Calu3 (cell line): ENCODE measurements at regions of chr16 and their contacts with region 1.

Region 1: GRCh38 chr16:57244767-57245471 is at the start of gene ARL2BP:
- DNase-seq: peak; percentile 100
- H3K4me3 Mint-ChIP-seq: peak within 1 kb of the TSS; percentile 82
- H3K27ac Mint-ChIP-seq: peak within 1 kb of the TSS; percentile 97
- H3K4me1 Mint-ChIP-seq: peaks cover 13% of the 10 kb centered on the region
- H3K27me3 Mint-ChIP-seq: no peaks in the 10 kb centered on the region
- CTCF ChIP-seq: no peak
- total RNA-seq, gene ARL2BP: 32.6 and 33.3 TPM in 2 replicates

Region 2: GRCh38 chr16:56911771-56912571 is 332.9 kb before region 1 on chr16:
- CTCF ChIA-PET with region 1: no interaction called
- intact Hi-C with region 1: no loop called
- DNase-seq: no peak
- H3K4me3 Mint-ChIP-seq: no peak overlapping the region
- H3K27ac Mint-ChIP-seq: no peak overlapping the region
- H3K4me1 Mint-ChIP-seq: peaks cover 16% of the 10 kb centered on the region
- H3K27me3 Mint-ChIP-seq: peaks cover 85% of the 10 kb centered on the region
- CTCF ChIP-seq: no peak

Region 3: DNA sequence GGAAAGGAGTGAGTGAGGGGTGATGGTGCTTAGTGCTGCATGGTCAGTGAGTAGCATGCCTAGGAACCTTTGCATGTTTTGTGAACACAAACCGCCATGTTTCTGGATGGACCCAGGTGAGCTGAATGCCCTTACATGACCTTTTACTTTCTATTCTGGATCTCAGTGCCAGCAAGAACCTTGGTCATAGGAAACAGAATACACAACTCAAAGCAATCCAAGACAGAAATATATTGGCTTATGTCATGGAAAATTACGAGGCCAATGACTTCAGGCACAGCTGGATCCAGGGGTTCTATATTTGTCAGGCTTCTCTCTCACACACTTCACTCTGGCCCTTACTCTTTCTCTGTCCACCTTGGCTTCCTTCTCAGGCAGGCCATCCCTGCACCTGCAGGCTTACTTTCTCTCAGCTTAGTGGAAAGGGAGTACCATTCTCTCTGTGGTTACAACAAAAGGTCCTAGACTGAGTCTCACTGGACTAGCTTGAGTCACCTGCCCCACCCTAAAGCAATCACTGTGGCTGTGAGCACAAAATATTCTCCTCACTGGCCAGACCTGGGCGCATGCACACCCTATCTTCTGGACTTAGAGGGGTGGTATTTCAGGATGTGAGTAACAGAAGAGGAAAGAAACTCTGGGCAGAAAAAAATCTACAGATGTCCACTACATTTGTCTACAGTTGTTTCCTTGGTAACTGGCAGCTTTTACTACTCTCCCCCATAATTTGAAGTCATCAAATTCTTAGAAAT is 172.9 kb before region 1 on chr16:
- CTCF ChIA-PET with region 1: no interaction called
- intact Hi-C with region 1: no loop called
- DNase-seq: peak; percentile 25
- H3K4me3 Mint-ChIP-seq: no peak overlapping the region
- H3K27ac Mint-ChIP-seq: no peak overlapping the region
- H3K4me1 Mint-ChIP-seq: peaks cover 8% of the 10 kb centered on the region
- H3K27me3 Mint-ChIP-seq: peaks cover 40% of the 10 kb centered on the region
- CTCF ChIP-seq: no peak

Region 4: DNA sequence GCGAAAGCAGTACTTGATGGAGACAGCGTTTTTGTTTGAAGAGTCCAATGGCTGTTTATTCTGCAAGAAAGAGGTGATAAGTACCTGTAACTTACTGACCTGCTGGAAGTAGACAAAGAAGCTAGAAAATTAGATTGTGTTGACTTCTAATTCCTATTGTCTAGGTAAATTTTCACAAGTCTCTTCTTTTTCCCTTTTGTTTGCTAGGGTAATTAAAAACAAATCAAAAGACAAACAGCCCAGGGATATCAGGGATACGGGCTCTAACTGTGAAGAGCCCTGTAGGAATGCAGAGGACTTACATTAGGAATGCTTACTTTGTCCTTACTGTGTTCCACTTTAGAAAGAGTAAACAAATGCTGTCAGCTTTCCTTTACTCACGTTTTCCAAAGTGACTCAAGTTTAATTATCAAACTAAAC is 66.1 kb before region 1 on chr16:
- CTCF ChIA-PET with region 1: no interaction called
- intact Hi-C with region 1: no loop called
- DNase-seq: no peak
- H3K4me3 Mint-ChIP-seq: no peak overlapping the region
- H3K27ac Mint-ChIP-seq: no peak overlapping the region
- H3K4me1 Mint-ChIP-seq: peaks cover 3% of the 10 kb centered on the region
- H3K27me3 Mint-ChIP-seq: no peaks in the 10 kb centered on the region
- CTCF ChIP-seq: no peak

Region 5: GRCh38 chr16:57194512-57194911 is 50.4 kb before region 1 on chr16:
- CTCF ChIA-PET with region 1: interaction called, 3 read pairs
- intact Hi-C with region 1: loop called (anchors 5 kb)
- DNase-seq: peak; percentile 11
- H3K4me3 Mint-ChIP-seq: no peak overlapping the region
- H3K27ac Mint-ChIP-seq: peak overlapping the region; percentile 16
- H3K4me1 Mint-ChIP-seq: peaks cover 47% of the 10 kb centered on the region
- H3K27me3 Mint-ChIP-seq: no peaks in the 10 kb centered on the region
- CTCF ChIP-seq: no peak

Region 6: DNA sequence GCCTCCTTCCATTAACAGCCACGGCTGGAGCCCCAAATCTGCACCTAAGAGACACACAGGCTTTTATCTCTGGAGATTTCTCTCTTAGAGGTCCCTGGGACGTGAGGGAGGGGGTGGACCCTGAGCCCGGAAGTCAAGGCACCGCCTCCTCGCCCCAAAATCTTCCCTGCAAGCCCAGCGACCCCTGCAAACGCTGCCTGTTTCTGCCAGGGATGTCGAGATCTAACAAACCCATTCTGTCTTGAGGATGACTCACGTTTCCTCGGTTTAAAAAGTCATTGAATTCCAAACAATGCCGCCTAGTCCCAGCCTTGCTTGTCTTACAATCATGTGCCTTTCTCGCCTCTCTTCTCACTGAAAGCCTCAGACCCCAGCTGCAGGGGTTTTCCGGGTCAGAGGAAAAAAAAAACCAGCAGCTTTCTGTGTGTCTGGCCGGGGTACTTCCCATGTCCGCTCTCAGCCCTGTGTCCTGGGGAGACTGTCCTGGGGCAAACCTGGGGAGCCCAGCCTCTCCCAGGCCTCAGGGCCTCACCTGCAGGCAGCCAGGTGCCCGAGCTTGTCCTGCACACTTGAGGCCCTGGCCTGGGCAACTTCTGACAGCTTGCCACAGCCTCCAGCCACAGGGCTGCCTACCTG is 15.5 kb after region 1 on chr16:
- CTCF ChIA-PET with region 1: no interaction called
- intact Hi-C with region 1: no loop called
- DNase-seq: peak; percentile 57
- H3K4me3 Mint-ChIP-seq: peak overlapping the region; percentile 41
- H3K27ac Mint-ChIP-seq: peak overlapping the region; percentile 87
- H3K4me1 Mint-ChIP-seq: peaks cover 32% of the 10 kb centered on the region
- H3K27me3 Mint-ChIP-seq: no peaks in the 10 kb centered on the region
- CTCF ChIP-seq: no peak

Region 7: DNA sequence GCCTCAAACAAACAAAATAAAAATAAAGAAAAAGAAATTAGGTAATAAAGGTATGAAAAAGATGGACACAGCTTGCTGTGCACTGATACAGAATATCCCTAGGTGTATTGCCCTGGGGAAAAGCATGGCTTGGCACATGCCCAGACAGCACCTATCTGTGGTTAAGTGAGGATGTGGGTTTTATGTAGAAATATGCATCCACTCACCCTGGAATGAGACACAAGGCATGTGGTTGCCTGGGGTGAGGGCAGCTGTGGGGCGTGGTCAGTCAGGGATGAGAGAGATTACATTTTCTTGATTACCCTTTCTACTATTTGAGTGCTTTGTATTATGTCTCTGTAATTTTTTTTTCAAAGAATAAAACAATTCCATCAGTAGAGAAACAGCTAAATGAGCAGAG is 32.7 kb after region 1 on chr16:
- CTCF ChIA-PET with region 1: interaction called, 7 read pairs
- intact Hi-C with region 1: loop called (anchors 2 kb)
- DNase-seq: peak; percentile 77
- H3K4me3 Mint-ChIP-seq: peak overlapping the region; percentile 1
- H3K27ac Mint-ChIP-seq: peak overlapping the region; percentile 18
- H3K4me1 Mint-ChIP-seq: peaks cover 68% of the 10 kb centered on the region
- H3K27me3 Mint-ChIP-seq: no peaks in the 10 kb centered on the region
- CTCF ChIP-seq: no peak